Endothelial cell of umbilical vein (primary cell): ENCODE measurements at regions of chr7 and their contacts with region 1.

Region 1: DNA sequence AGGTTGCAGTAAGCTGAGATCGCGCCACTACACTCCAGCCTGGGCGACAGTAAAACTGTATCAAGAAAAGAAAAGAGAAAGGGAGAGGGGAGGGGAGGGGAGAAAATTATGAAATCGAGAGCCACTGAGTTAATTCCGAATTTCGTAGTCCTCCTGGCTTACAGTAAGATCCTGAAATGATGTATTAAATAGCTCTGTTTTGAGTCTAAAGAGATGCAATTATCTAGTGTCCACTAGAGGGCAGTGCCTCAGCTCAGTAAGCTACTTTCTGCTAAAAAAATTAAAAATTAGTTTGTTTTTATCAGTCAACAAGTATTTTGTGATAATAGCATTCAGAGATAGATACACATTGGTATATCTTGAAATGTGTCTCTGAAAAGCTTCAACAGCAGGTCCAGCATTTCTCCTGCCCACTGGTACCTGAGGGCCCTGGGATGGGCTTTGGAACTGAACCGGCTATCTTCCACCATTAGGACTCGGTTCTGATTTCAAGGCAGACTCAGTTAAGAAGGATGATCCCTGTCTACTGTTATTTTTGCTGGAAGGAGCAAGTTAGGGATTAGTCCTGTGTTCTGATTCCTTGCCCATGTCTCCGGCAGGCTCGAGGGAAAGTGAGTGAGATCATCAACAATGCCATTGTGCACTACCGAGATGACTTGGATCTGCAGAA is 19.5 kb downstream of the TSPAN33 start:
- DNase-seq: peak; percentile 61
- H3K4me3 ChIP-seq: no peak overlapping the region
- H3K27ac ChIP-seq: no peak overlapping the region
- H3K4me1 ChIP-seq: no peaks in the 10 kb centered on the region
- H3K27me3 ChIP-seq: peaks cover 15 to 19% of the 10 kb centered on the region in 2 experiments
- CTCF ChIP-seq: peak; percentile 56 to 61
- POLR2A ChIP-seq: no peak

Region 2: DNA sequence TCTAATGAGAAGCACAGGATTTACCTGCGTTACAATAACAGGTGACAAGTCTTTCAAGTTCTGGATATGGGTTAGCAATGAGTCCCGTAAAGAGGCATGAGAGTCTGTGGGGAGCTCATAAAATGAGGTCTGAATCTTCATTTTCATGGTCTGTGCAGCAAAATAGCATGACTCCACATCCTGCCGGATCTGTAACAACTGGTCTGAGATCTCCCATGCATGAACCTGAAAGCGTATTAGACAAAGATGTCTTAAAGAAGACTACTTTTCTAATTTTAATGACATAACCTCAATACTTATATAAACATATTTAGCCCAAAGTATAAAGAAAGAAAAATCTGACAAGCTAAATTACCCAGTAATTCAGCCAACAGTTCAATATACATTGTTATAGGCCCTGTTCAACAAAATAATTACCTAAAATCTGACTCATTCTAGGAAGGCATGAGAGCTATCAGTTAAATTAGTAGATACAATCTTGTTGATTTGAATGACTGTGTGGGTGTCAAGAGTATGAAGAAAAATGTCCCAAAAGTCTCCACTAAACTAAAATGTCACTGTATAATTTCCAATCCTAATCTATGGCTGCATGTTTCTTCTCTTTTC is 146.0 kb before region 1 on chr7:
- CTCF ChIA-PET with region 1: no interaction called
- POLR2A ChIA-PET with region 1: no interaction called
- dilution Hi-C with region 1: no loop called
- intact Hi-C with region 1: no loop called
- DNase-seq: no peak
- H3K4me3 ChIP-seq: no peak overlapping the region
- H3K27ac ChIP-seq: no peak overlapping the region
- H3K4me1 ChIP-seq: no peaks in the 10 kb centered on the region
- H3K27me3 ChIP-seq: no peaks in the 10 kb centered on the region
- CTCF ChIP-seq: no peak
- POLR2A ChIP-seq: no peak

Region 3: GRCh38 chr7:129054438-129055293 is 109.3 kb before region 1 on chr7 and contains the start of gene TNPO3:
- CTCF ChIA-PET with region 1: interaction called, 10 read pairs
- POLR2A ChIA-PET with region 1: no interaction called
- dilution Hi-C with region 1: no loop called
- intact Hi-C with region 1: no loop called
- DNase-seq: peak; percentile 86
- H3K4me3 ChIP-seq: peak within 1 kb of the TSS; percentile 68 to 93 (median 93)
- H3K27ac ChIP-seq: peak within 1 kb of the TSS; percentile 80
- H3K4me1 ChIP-seq: peaks cover 15% of the 10 kb centered on the region
- H3K27me3 ChIP-seq: peaks cover 5 to 8% of the 10 kb centered on the region in 2 experiments
- CTCF ChIP-seq: peak in 1 of 2 donors; percentile 7
- POLR2A ChIP-seq: peak; percentile 86
- total RNA-seq, gene TNPO3: 46.9 TPM in 2 replicates

Region 4: GRCh38 chr7:129126314-129126713 is 37.7 kb before region 1 on chr7:
- CTCF ChIA-PET with region 1: interaction called, 13 read pairs
- POLR2A ChIA-PET with region 1: no interaction called
- dilution Hi-C with region 1: no loop called
- intact Hi-C with region 1: no loop called
- DNase-seq: no peak
- H3K4me3 ChIP-seq: no peak overlapping the region
- H3K27ac ChIP-seq: no peak overlapping the region
- H3K4me1 ChIP-seq: no peaks in the 10 kb centered on the region
- H3K27me3 ChIP-seq: peaks cover 9 to 14% of the 10 kb centered on the region in 2 experiments
- CTCF ChIP-seq: no peak
- POLR2A ChIP-seq: no peak

Region 5: GRCh38 chr7:129150199-129150996 is 13.6 kb before region 1 on chr7:
- CTCF ChIA-PET with region 1: interaction called, 53 read pairs
- POLR2A ChIA-PET with region 1: no interaction called
- dilution Hi-C with region 1: no loop called
- intact Hi-C with region 1: no loop called
- DNase-seq: no peak
- H3K4me3 ChIP-seq: no peak overlapping the region
- H3K27ac ChIP-seq: no peak overlapping the region
- H3K4me1 ChIP-seq: no peaks in the 10 kb centered on the region
- H3K27me3 ChIP-seq: peaks cover 28 to 36% of the 10 kb centered on the region in 2 experiments
- CTCF ChIP-seq: no peak
- POLR2A ChIP-seq: no peak

Region 6: DNA sequence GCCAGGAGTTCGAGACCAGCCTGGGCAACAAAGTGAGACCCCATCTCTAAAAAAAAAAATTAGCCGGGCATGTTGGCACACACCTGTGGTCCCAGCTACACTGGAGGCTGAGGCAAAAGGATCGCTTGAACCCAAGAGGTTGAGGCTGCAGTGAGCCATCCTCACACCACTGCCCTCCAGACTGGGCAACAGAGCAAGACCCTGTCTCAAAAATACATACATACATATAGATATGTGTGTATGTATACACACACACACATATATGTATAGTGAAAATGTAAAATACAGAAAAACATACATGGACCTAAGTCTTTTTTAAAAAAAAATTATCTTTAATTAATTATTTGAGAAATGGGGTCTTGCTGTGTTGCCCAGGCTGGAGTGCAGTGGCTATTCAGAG is 29.9 kb after region 1 on chr7:
- CTCF ChIA-PET with region 1: interaction called, 32 read pairs
- POLR2A ChIA-PET with region 1: no interaction called
- dilution Hi-C with region 1: no loop called
- intact Hi-C with region 1: no loop called
- DNase-seq: no peak
- H3K4me3 ChIP-seq: no peak overlapping the region
- H3K27ac ChIP-seq: no peak overlapping the region
- H3K4me1 ChIP-seq: peaks cover 4% of the 10 kb centered on the region
- H3K27me3 ChIP-seq: peaks cover 0 to 3% of the 10 kb centered on the region in 2 experiments
- CTCF ChIP-seq: no peak
- POLR2A ChIP-seq: no peak

Region 7: DNA sequence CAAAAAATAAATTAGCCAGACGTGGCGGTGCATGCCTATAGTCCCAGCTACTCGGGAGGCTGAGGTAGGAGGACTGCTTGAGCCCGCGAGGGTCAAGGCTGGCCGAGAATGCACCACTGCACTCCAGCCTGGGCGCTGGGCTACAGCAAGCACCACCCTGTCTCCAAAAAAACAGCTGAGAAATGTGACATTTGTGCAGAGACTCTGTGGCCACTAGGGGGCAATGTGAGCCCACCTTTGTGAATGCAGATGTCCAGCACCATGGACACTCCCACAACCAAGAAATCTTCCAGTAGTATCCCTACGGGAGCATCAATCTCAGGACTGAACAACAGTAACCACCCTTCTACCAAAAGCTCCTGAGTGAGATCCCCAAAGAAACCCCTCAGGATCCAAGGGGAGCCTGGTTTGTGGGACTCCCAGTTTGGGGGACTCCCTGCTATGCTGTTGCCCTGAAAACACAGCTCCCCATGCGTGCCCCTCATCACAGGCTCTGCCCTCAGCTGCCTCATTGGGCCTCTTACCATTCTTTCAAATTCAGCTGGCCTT is 54.6 kb after region 1 on chr7:
- CTCF ChIA-PET with region 1: interaction called, 465 read pairs
- POLR2A ChIA-PET with region 1: interaction called, 7 read pairs
- dilution Hi-C with region 1: no loop called
- intact Hi-C with region 1: no loop called
- DNase-seq: peak; percentile 80
- H3K4me3 ChIP-seq: no peak overlapping the region
- H3K27ac ChIP-seq: no peak overlapping the region
- H3K4me1 ChIP-seq: peaks cover 7% of the 10 kb centered on the region
- H3K27me3 ChIP-seq: peaks cover 0 to 2% of the 10 kb centered on the region in 2 experiments
- CTCF ChIP-seq: peak; percentile 79 to 84
- POLR2A ChIP-seq: no peak

Region 8: GRCh38 chr7:129468087-129468486 is 304.1 kb after region 1 on chr7:
- CTCF ChIA-PET with region 1: interaction called, 11 read pairs
- POLR2A ChIA-PET with region 1: no interaction called
- dilution Hi-C with region 1: no loop called
- intact Hi-C with region 1: no loop called
- DNase-seq: no peak
- H3K4me3 ChIP-seq: no peak overlapping the region
- H3K27ac ChIP-seq: no peak overlapping the region
- H3K4me1 ChIP-seq: no peaks in the 10 kb centered on the region
- H3K27me3 ChIP-seq: no peaks in the 10 kb centered on the region
- CTCF ChIP-seq: no peak
- POLR2A ChIP-seq: no peak